Heart left ventricle (tissue), 16 donors: ENCODE measurements at regions of chr4 and their contacts with region 1.

Region 1: DNA sequence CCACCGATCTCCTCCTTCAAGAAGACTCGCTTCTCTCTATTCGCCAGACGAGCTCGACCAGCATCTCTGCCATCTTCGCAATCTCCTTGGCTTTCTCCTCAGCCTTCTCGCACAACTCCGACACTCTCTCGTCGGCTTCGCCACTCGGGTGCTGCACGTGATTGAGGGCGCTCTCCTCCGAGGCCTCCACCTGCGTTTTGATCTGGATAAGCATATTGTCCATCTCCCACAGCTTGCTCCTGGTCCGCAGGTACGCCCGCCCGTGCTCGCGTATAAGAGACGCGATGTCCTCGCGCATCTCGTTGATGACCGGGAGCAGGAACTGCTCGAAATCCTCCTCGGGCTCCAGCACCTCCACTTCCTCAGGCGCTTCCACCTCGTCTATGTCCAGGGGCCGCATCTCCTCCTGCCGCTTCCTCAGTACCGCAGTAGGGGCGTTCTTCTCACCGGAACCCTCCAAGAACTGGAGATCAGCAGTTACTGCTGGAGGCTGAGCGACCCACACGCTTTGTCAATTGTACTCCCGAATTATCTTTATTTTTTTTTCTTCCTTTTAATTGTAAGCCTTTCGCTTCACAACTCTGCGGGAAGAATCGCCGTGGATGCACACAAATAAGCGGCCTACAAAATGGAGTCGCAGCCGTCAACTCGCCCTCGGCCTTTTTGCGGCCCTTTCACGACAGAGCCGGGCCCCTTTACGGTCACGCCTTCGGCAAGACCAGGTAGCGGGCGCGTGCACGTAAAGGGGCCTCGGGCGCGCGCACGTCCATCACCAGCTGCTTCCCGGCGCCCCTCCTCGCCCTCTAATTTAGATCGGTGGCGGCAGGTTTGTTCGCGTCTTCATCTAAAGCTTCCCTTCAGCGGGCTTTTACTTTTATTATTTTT is at the start of gene MRFAP1L1:
- DNase-seq: peak; percentile 97 to 98 (median 98)
- ATAC-seq: peak; percentile 82 to 92 (median 88)
- H3K4me3 ChIP-seq: peak within 1 kb of the TSS; percentile 63 to 97 (median 88)
- H3K27ac ChIP-seq: peak within 1 kb of the TSS; percentile 70 to 95 (median 86)
- H3K4me1 ChIP-seq: peaks cover 0 to 53% (median 43%) of the 10 kb centered on the region in 12 donors
- H3K27me3 ChIP-seq: no peaks in the 10 kb centered on the region
- CTCF ChIP-seq: peak in 3 of 12 donors; percentile 6 to 28 (median 16)
- POLR2A ChIP-seq: peak in 1 of 2 donors; percentile 43
- total RNA-seq, gene MRFAP1L1: 38.2 to 50.7 (median 41.3) TPM

Region 2: GRCh38 chr4:6640292-6641163 is 68.9 kb before region 1 on chr4 and contains the start of gene MRFAP1:
- intact Hi-C with region 1: loop called in 7 of 10 experiments (anchors 2 to 5 kb)
- DNase-seq: peak; percentile 95 to 97 (median 96)
- ATAC-seq: peak; percentile 87 to 96 (median 93)
- H3K4me3 ChIP-seq: peak within 1 kb of the TSS; percentile 48 to 96 (median 84)
- H3K27ac ChIP-seq: peak within 1 kb of the TSS; percentile 79 to 97 (median 93)
- H3K4me1 ChIP-seq: peaks cover 7 to 39% (median 28%) of the 10 kb centered on the region in 12 donors
- H3K27me3 ChIP-seq: no peaks in the 10 kb centered on the region
- CTCF ChIP-seq: peak in 1 of 12 donors; percentile 7
- POLR2A ChIP-seq: peak in 1 of 2 donors; percentile 68
- total RNA-seq, gene MRFAP1: 162 to 300 (median 239) TPM